Panc1 (cell line): ENCODE measurements at regions of chr3 and their contacts with region 1.

Region 1: DNA sequence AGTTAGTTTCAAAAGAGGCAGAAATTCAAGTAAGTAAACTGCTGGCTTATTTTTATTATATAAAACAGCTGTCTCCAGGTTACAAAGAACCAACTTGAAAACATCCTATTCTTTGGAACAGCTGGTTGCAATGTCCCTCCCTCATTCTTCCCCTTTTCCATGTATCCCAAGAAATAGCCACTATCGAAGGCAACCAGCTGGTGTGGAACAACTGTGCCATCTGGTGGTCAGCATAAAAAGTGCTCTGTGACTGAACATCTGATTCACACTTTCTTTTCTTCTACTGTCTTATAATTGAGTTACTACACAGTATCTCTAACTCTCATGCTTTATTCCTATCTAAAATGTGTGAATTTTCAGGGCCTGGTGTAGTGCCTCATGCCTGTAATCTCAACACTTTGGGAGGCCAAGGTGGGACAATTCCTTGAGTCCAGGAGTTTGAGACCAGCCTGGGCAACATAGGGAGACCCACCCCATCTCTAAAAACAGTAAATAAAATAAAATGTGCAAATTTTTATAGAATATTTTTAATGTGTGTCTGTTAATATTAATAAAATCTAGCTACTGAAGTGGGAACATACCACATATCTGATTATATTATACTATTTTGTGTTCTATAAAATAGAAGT is 9.6 kb downstream of the OSBPL11 start:
- DNase-seq: no peak
- ATAC-seq: peak; percentile 81
- H3K4me3 ChIP-seq: no peak overlapping the region
- H3K27ac ChIP-seq: no peak overlapping the region
- H3K4me1 ChIP-seq: no peaks in the 10 kb centered on the region; the same call in 1 of the 2 replicates
- H3K27me3 ChIP-seq: no peaks in the 10 kb centered on the region
- CTCF ChIP-seq: peak; percentile 95

Region 2: DNA sequence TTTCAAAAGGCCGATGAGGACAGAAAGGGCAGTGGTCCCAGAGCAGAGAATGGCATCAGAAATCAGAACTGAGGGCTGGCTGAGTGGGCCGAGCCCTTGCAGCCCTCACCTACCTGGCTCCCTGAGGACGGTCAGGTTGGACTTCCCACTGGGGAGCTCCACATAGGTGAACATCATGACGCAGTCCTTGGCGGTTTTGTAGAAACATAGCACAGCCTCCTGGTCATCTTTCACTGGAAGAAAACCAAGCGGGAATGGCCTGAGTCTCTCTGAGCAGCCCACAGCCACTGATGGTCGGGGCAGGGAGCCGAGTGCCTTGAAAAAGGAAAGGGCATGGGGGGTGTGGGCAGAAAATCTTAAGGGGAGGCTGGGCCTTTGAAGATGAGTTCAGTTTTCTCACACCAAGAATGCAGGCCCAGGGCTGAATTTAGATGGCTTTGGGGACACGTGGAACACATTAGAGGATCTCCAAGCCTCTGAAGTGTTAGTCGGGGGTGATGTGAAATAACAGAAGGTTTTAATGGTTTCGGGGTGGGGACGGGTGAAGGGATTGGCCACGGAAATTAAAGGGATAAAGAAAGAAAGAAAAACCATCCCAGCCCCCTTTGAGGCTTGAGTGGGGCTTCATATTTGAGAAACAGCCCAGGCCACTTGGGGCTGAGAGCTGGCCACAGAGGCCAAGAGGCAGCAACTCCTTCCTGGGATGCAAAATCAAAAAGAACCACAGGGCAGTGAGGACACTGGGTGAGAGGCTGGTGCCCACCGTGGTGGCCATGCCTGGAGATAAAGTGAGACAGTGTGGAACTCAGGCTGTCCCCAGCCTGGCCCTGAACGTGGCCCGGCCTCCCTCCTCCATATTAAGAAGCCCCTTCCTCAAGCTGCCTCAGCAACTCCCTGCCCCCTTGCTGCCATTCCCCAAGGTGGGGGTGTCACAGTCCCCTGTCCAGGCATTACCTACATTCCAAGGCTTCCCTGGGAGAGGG is 819.3 kb before region 1 on chr3:
- CTCF ChIA-PET with region 1: no interaction called
- POLR2A ChIA-PET with region 1: interaction called, 15 read pairs
- in situ Hi-C with region 1: no loop called
- intact Hi-C with region 1: no loop called
- DNase-seq: no peak
- ATAC-seq: no peak
- H3K4me3 ChIP-seq: no peak overlapping the region
- H3K27ac ChIP-seq: no peak overlapping the region
- H3K4me1 ChIP-seq: peaks cover 7% of the 10 kb centered on the region
- H3K27me3 ChIP-seq: no peaks in the 10 kb centered on the region
- CTCF ChIP-seq: no peak

Region 3: DNA sequence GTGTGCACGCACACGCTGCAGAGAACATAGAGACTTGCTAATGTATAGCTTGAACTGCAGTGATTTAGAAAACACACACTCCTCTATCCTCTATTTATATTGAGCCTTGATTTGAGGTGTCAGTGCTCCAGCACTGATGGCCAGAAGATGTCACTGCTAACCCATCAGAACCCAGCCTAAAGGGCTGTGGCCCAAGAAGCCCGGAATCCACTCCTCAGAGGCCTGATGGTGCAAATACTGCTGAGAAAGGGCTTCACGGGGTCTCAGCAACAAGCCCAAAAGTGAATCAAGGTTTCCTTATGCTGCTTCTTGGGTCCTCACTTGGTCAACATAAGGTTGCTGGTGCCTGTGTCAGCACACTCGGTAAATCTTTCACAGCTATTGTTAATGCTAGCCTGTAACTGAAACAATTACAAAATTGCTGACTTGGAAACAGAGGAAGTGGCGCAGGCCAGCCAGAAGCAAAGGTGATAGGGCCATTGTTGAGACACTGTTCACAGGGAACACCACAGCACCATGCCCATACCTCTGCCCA is 590.2 kb before region 1 on chr3:
- CTCF ChIA-PET with region 1: interaction called, 5 read pairs
- POLR2A ChIA-PET with region 1: no interaction called
- in situ Hi-C with region 1: no loop called
- intact Hi-C with region 1: loop called (anchors 10 kb)
- DNase-seq: peak; percentile 27
- ATAC-seq: peak; percentile 90
- H3K4me3 ChIP-seq: no peak overlapping the region
- H3K27ac ChIP-seq: peak overlapping the region; percentile 25; the same call in 1 of the 2 replicates
- H3K4me1 ChIP-seq: peaks cover 14% of the 10 kb centered on the region; the same call in 1 of the 2 replicates
- H3K27me3 ChIP-seq: no peaks in the 10 kb centered on the region
- CTCF ChIP-seq: peak; percentile 85

Region 4: GRCh38 chr3:125462722-125463299 is 122.9 kb before region 1 on chr3:
- CTCF ChIA-PET with region 1: no interaction called
- POLR2A ChIA-PET with region 1: no interaction called
- in situ Hi-C with region 1: no loop called
- intact Hi-C with region 1: loop called (anchors 10 kb)
- DNase-seq: no peak
- ATAC-seq: no peak
- H3K4me3 ChIP-seq: no peak overlapping the region
- H3K27ac ChIP-seq: no peak overlapping the region
- H3K4me1 ChIP-seq: no peaks in the 10 kb centered on the region
- H3K27me3 ChIP-seq: no peaks in the 10 kb centered on the region
- CTCF ChIP-seq: no peak

Region 5: DNA sequence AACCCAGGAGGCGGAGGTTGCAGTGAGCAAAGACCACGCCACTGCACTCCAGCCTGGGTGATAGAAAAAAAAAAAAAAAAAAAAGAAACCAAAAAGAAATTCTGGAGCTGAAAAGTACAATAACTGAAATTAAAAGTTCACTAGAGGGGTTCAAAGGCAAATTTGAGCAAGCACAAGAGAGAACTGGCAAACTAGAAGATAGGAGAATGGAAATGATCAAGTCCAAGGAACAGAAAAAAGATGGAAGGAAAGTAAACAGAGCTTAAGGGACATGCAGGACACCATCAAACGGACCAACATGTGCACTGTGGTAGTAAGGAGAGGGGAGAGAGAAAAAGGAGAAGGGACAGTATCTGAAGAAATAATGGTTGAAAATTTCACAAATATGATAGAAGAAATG is 78.6 kb before region 1 on chr3:
- CTCF ChIA-PET with region 1: no interaction called
- POLR2A ChIA-PET with region 1: no interaction called
- in situ Hi-C with region 1: no loop called
- intact Hi-C with region 1: loop called (anchors 10 kb)
- DNase-seq: no peak
- ATAC-seq: no peak
- H3K4me3 ChIP-seq: no peak overlapping the region
- H3K27ac ChIP-seq: no peak overlapping the region
- H3K4me1 ChIP-seq: no peaks in the 10 kb centered on the region
- H3K27me3 ChIP-seq: no peaks in the 10 kb centered on the region
- CTCF ChIP-seq: no peak

Region 6: DNA sequence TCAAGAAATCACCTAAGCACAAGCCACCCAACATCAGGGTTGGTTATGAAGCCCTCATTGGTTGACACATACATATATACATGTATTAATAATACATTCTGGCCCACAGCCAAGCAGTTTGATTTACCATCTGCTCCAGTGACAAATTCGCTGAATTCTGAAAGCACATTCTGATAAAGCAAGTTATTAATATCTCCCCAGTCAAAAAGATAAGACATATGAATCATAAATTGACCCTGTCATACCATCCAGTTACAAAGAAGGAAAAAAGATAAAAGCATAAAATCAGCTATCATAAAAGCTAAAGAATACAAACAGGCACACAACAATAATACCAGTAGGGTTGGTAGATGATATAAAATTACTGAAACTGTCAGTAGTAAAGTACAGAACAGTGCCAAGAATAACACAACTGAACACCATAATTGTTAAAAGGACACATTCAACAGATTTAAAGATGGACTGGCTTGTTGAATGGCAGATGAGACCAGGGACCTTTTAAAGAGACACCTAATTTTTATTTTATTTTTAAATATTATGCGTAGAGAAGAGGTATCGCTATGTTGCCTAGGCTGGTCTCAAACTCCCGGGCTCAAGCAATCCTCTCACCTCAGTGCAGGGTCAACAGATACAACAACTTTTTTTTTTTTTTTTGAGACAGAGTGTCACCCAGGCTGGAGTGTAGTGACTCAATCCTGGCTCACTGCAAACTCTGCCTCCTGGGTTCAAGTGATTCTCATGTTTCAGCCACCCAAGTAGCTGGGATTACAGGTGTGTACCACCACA is 73.4 kb before region 1 on chr3:
- CTCF ChIA-PET with region 1: interaction called, 11 read pairs
- POLR2A ChIA-PET with region 1: no interaction called
- in situ Hi-C with region 1: no loop called
- intact Hi-C with region 1: loop called (anchors 10 kb)
- DNase-seq: no peak
- ATAC-seq: no peak
- H3K4me3 ChIP-seq: no peak overlapping the region
- H3K27ac ChIP-seq: no peak overlapping the region
- H3K4me1 ChIP-seq: no peaks in the 10 kb centered on the region
- H3K27me3 ChIP-seq: no peaks in the 10 kb centered on the region
- CTCF ChIP-seq: no peak